HCT116 (cell line): ENCODE measurements at regions of chr10 and their contacts with region 1.

Region 1: GRCh38 chr10:17409170-17409733 is 45.1 kb downstream of the ST8SIA6 start:
- DNase-seq: no peak
- ATAC-seq: peak; percentile 67
- H3K4me3 ChIP-seq: no peak overlapping the region
- H3K27ac ChIP-seq: no peak overlapping the region
- H3K4me1 ChIP-seq: no peaks in the 10 kb centered on the region
- H3K27me3 ChIP-seq: no peaks in the 10 kb centered on the region
- CTCF ChIP-seq: peak; percentile 31 to 55 (median 51); a peak in 4 of 6 replicates
- POLR2A ChIP-seq: no peak
- RAD21 ChIP-seq: peak; percentile 51

Region 2: GRCh38 chr10:17309435-17309834 is 99.8 kb before region 1 on chr10:
- CTCF ChIA-PET with region 1: no interaction called
- POLR2A ChIA-PET with region 1: no interaction called
- RAD21 ChIA-PET with region 1: no interaction called
- intact Hi-C with region 1: loop called (anchors 5 kb)
- DNase-seq: no peak
- ATAC-seq: no peak
- H3K4me3 ChIP-seq: no peak overlapping the region
- H3K27ac ChIP-seq: no peak overlapping the region
- H3K4me1 ChIP-seq: no peaks in the 10 kb centered on the region
- H3K27me3 ChIP-seq: no peaks in the 10 kb centered on the region
- CTCF ChIP-seq: no peak
- POLR2A ChIP-seq: no peak
- RAD21 ChIP-seq: no peak

Region 3: GRCh38 chr10:17394854-17395253 is 14.4 kb before region 1 on chr10:
- CTCF ChIA-PET with region 1: interaction called, 12 read pairs
- POLR2A ChIA-PET with region 1: no interaction called
- RAD21 ChIA-PET with region 1: no interaction called
- intact Hi-C with region 1: no loop called
- DNase-seq: no peak
- ATAC-seq: no peak
- H3K4me3 ChIP-seq: no peak overlapping the region
- H3K27ac ChIP-seq: no peak overlapping the region
- H3K4me1 ChIP-seq: no peaks in the 10 kb centered on the region
- H3K27me3 ChIP-seq: no peaks in the 10 kb centered on the region
- CTCF ChIP-seq: no peak
- POLR2A ChIP-seq: no peak
- RAD21 ChIP-seq: no peak